HepG2 (cell line): ENCODE measurements at regions of chr9 and their contacts with region 1.

Region 1: DNA sequence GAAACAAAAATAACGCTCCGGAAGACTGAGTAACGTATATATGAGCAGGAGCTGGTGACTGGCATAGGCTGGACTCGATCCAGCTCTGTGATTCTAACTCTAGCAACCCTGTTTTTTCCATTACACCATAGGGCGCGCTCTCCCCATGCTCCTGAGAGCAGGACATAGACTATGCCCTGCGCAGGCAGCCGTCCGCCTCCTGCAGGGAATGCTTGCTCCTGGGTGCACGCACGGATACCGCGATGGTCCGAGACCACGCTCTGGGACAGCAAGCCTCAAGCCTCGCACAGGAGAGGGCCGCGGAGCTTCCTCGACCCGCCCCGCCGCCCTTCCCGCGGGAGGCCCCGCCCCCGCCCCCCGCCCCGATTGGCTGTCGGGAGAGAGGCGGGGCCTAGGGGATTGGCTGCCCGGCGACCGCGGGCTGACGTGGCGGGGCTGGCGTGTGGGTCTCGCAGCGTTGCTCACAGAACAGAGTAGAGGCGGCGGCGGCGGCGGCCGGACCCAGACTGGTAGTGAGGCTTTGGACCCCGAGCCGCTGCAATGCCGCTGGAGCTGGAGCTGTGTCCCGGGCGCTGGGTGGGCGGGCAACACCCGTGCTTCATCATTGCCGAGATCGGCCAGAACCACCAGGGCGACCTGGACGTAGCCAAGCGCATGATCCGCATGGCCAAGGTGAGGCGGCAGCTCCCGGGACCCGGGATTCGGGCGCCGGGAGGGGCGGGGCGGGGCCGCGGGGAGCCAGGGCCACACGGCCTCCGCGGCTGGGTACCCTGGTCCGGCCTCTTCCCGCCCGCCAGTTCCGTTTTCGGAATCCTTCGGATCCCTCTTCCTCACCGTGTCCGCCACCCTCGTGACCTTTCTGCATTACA is at the start of gene NANS:
- DNase-seq: peak; percentile 95
- ATAC-seq: peak; percentile 98
- H3K4me3 ChIP-seq: peak within 1 kb of the TSS; percentile 87 to 97 (median 93)
- H3K27ac ChIP-seq: peak within 1 kb of the TSS; percentile 93
- H3K4me1 ChIP-seq: peaks cover 38% of the 10 kb centered on the region
- H3K27me3 ChIP-seq: no peaks in the 10 kb centered on the region
- CTCF ChIP-seq: peak; percentile 58
- EP300 ChIP-seq: no peak
- POLR2A ChIP-seq: peak; percentile 93 to 97
- RAD21 ChIP-seq: peak; percentile 12; the same call in 1 of the 2 replicates
- total RNA-seq, gene NANS: 203 and 266 TPM in 2 replicates

Region 2: GRCh38 chr9:97982683-97983588 is 73.6 kb before region 1 on chr9 and contains the start of gene ANP32B:
- CTCF ChIA-PET with region 1: no interaction called
- POLR2A ChIA-PET with region 1: interaction called, 16 read pairs
- in situ Hi-C with region 1: no loop called
- intact Hi-C with region 1: no loop called
- DNase-seq: peak; percentile 67
- ATAC-seq: peak; percentile 90
- H3K4me3 ChIP-seq: peak within 1 kb of the TSS; percentile 84 to 93 (median 90)
- H3K27ac ChIP-seq: peak within 1 kb of the TSS; percentile 95
- H3K4me1 ChIP-seq: peaks cover 52% of the 10 kb centered on the region
- H3K27me3 ChIP-seq: no peaks in the 10 kb centered on the region; a peak in 2 of 5 replicates
- CTCF ChIP-seq: peak; percentile 76
- EP300 ChIP-seq: peak in 1 of 2 experiments; percentile 22; a peak in 1 of 4 replicates
- POLR2A ChIP-seq: peak; percentile 17 to 55; a peak in 3 of 4 replicates
- RAD21 ChIP-seq: peak; percentile 58
- total RNA-seq, gene ANP32B: 22.1 and 67.0 TPM in 2 replicates

Region 3: DNA sequence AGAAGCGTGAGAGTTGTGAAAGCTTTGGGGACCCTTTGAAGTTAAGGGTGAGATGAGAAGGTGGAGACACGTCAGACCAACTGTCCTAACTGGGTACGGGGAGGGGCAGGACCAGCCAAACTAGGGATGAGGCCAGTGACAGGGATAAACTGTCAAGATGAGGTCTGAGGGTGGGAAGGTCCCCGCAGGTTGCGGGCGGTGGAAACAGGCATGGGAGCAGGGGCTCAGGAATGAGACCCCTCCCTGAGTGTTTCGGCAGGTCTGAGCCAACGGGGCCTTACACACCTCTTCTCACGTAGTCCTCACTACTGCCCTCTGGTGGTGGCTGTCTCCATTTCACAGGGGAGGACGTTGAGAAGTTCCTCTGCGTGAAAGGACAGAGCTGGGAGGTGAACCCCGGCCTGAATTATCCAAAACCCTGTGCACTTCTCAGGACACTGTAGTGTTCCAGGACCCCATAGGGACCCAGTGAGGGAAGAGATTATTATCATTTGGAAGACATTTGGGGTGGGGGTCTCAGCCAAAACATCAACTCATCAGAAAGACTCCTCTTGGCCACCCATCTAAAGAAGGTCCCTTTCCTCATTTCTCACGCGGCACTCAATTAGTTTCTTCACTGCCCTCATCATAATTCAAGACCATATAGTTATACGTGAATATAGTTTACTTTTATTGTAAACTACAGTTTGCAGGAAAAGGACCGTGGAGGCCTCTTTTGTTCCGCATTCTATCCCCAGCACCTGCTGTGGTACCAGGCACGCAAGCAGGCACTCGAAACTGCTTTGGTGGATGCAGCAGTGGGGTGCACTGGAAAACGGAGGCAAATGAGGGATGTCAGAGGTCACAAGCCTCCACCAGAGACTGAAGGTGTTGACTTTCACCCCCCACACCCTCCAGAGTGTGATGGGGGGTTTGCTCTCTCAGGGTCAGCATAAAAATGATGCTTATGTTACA is 21.6 kb before region 1 on chr9:
- CTCF ChIA-PET with region 1: no interaction called
- POLR2A ChIA-PET with region 1: interaction called, 10 read pairs
- in situ Hi-C with region 1: no loop called
- intact Hi-C with region 1: no loop called
- DNase-seq: peak; percentile 76
- ATAC-seq: peak; percentile 94
- H3K4me3 ChIP-seq: peak overlapping the region in 1 of 3 experiments; percentile 75; a peak in 2 of 6 replicates
- H3K27ac ChIP-seq: no peak overlapping the region
- H3K4me1 ChIP-seq: peaks cover 25% of the 10 kb centered on the region
- H3K27me3 ChIP-seq: peaks cover 0 to 13% of the 10 kb centered on the region in 2 experiments; a peak in 2 of 5 replicates
- CTCF ChIP-seq: peak; percentile 87
- EP300 ChIP-seq: no peak
- POLR2A ChIP-seq: no peak
- RAD21 ChIP-seq: no peak

Region 4: GRCh38 chr9:98045234-98046179 is 11.0 kb before region 1 on chr9:
- CTCF ChIA-PET with region 1: no interaction called
- POLR2A ChIA-PET with region 1: interaction called, 30 read pairs
- in situ Hi-C with region 1: no loop called
- intact Hi-C with region 1: loop called (anchors 1 kb)
- DNase-seq: peak; percentile 77
- ATAC-seq: peak; percentile 90
- H3K4me3 ChIP-seq: peak overlapping the region; percentile 35 to 48 (median 40); a peak in 5 of 6 replicates
- H3K27ac ChIP-seq: peak overlapping the region; percentile 52
- H3K4me1 ChIP-seq: peaks cover 28% of the 10 kb centered on the region
- H3K27me3 ChIP-seq: no peaks in the 10 kb centered on the region
- CTCF ChIP-seq: no peak; the same call in 1 of the 2 replicates
- EP300 ChIP-seq: no peak
- POLR2A ChIP-seq: peak; percentile 42 to 81; a peak in 3 of 4 replicates
- RAD21 ChIP-seq: no peak

Region 5: DNA sequence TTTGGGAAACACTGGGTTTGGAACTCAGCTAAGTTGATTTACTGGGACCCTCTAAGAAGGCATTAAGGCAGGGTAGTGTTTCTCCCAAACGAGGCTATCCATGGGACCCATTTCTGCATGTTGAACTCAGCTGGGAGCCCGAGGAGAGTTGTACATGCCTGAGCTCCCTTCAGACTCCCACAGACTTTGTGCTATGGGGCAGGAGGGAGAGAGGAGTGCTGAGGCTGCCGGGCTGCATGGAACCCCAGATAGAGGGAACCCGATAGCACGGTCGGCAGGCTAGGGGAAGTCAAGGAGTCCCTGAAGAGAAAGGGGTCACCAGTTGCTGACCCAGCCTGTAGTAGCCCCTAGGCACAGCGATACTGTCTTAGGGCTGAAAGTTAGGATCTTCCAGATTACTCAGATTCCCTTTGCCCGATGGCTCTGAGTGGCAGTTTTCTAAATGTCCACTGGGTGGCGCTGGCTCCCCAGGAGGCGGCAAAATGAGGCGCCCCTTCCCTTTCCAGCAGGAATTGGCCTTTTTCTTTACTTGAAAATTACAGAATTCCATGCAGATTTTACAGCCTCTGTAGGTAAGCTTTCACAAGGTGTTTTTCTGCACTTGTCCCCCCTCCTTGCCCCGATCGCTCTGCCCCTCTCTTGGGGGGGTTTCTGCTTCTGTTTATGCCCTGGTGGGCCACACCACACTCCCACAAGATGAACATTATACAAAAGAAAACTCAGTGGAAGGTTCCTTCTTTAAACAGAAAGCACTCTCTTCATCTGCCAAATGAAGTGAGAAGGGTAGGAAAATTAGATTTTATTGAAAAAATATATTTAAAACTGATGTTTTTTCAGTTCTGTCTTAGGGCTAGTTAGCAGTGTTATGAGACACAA is 17.9 kb after region 1 on chr9:
- CTCF ChIA-PET with region 1: no interaction called
- POLR2A ChIA-PET with region 1: interaction called, 6 read pairs
- in situ Hi-C with region 1: no loop called
- intact Hi-C with region 1: loop called (anchors 2 kb)
- DNase-seq: peak; percentile 36
- ATAC-seq: peak; percentile 73
- H3K4me3 ChIP-seq: no peak overlapping the region
- H3K27ac ChIP-seq: peak overlapping the region; percentile 29
- H3K4me1 ChIP-seq: peaks cover 42% of the 10 kb centered on the region
- H3K27me3 ChIP-seq: no peaks in the 10 kb centered on the region
- CTCF ChIP-seq: peak; percentile 87
- EP300 ChIP-seq: no peak
- POLR2A ChIP-seq: no peak
- RAD21 ChIP-seq: peak; percentile 74

Region 6: GRCh38 chr9:98101868-98102273 is 45.4 kb after region 1 on chr9:
- CTCF ChIA-PET with region 1: no interaction called
- POLR2A ChIA-PET with region 1: no interaction called
- in situ Hi-C with region 1: no loop called
- intact Hi-C with region 1: no loop called
- DNase-seq: no peak
- ATAC-seq: no peak
- H3K4me3 ChIP-seq: no peak overlapping the region
- H3K27ac ChIP-seq: no peak overlapping the region
- H3K4me1 ChIP-seq: peaks cover 12% of the 10 kb centered on the region
- H3K27me3 ChIP-seq: no peaks in the 10 kb centered on the region
- CTCF ChIP-seq: no peak
- EP300 ChIP-seq: no peak
- POLR2A ChIP-seq: no peak
- RAD21 ChIP-seq: no peak

Region 7: DNA sequence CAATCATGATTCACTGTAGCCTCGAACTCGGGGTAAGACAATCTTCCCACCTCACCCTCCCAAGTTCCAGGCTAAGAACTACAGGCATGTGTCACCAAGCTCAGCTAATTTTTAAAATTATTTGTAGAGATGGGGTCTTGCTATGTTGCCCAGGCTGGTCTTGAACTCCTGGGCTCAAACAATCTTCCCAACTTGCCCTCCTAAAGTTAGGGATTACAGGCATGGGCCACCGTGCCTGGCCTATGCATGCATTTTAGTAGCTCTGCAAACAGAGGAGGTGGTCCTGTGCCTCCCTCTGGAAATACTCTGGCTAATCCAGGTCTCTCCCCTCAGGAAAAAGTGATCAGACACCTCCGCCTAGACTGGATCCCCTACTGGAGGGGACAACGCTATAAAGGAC is 84.0 kb after region 1 on chr9:
- CTCF ChIA-PET with region 1: no interaction called
- POLR2A ChIA-PET with region 1: no interaction called
- in situ Hi-C with region 1: no loop called
- intact Hi-C with region 1: no loop called
- DNase-seq: no peak
- ATAC-seq: no peak
- H3K4me3 ChIP-seq: no peak overlapping the region
- H3K27ac ChIP-seq: no peak overlapping the region
- H3K4me1 ChIP-seq: peaks cover 15% of the 10 kb centered on the region
- H3K27me3 ChIP-seq: no peaks in the 10 kb centered on the region
- CTCF ChIP-seq: no peak
- EP300 ChIP-seq: no peak
- POLR2A ChIP-seq: no peak
- RAD21 ChIP-seq: no peak

Region 8: GRCh38 chr9:98231770-98232478 is 175.4 kb after region 1 on chr9:
- CTCF ChIA-PET with region 1: no interaction called
- POLR2A ChIA-PET with region 1: interaction called, 13 read pairs
- in situ Hi-C with region 1: no loop called
- intact Hi-C with region 1: no loop called
- DNase-seq: no peak
- ATAC-seq: no peak
- H3K4me3 ChIP-seq: no peak overlapping the region
- H3K27ac ChIP-seq: no peak overlapping the region
- H3K4me1 ChIP-seq: peaks cover 45% of the 10 kb centered on the region
- H3K27me3 ChIP-seq: no peaks in the 10 kb centered on the region
- CTCF ChIP-seq: no peak
- EP300 ChIP-seq: no peak
- POLR2A ChIP-seq: no peak
- RAD21 ChIP-seq: no peak

Region 9: DNA sequence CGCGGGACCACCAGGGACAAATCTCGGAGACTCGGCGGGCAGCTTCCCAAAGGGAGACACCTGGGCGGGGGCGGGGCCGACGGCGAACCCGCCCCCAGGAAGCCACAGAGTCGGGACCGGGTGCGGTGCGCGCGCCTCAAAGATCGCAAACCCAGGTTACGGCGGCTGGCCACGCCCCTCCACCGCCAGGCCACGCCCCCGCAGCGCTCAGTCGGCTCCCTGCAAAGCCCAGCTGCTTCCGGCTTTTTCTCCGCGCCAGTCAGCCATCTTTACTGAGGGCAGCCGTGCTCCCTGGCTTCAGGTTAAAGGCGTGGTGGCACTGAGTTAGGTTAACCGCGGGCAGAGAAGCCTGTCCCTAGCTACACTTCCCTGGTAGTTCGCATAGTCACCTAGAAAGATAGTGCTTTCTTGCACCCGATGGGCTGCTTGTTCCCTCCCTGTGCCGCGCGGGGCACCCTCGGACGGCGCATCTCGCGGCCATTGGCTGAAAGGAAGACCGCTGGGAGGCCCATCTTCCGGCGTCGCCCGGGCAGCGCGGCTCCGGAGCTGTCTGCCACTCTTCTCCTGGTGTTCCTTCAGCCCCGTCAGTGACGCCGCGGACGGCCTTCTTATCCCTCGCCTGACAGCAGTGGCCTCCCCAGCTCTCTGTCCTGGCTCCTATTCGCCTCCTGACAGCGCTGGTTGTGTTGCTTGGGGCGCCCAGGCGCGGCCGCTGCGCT is 199.2 kb after region 1 on chr9 and contains the start of gene TBC1D2:
- CTCF ChIA-PET with region 1: no interaction called
- POLR2A ChIA-PET with region 1: interaction called, 23 read pairs
- in situ Hi-C with region 1: no loop called
- intact Hi-C with region 1: no loop called
- DNase-seq: peak; percentile 85
- ATAC-seq: peak; percentile 93
- H3K4me3 ChIP-seq: peak within 1 kb of the TSS; percentile 88 to 92 (median 89)
- H3K27ac ChIP-seq: peak within 1 kb of the TSS; percentile 87
- H3K4me1 ChIP-seq: peaks cover 29% of the 10 kb centered on the region
- H3K27me3 ChIP-seq: no peaks in the 10 kb centered on the region; a peak in 1 of 5 replicates
- CTCF ChIP-seq: peak; percentile 27; the same call in 1 of the 2 replicates
- EP300 ChIP-seq: peak in 1 of 2 experiments; percentile 11; a peak in 1 of 4 replicates
- POLR2A ChIP-seq: peak; percentile 52 to 80; a peak in 3 of 4 replicates
- RAD21 ChIP-seq: no peak; the same call in 1 of the 2 replicates
- total RNA-seq, gene TBC1D2: 2.2 and 2.8 TPM in 2 replicates